ENCODE measurements at regions of chr10 and their contacts with region 1.

Region 1: GRCh38 chr10:122112625-122113160 is 123.7 kb downstream of the TACC2 start:
- DNase-seq: peak; percentile 77 to 89 (median 87)
- H3K4me3 ChIP-seq: peak overlapping the region; percentile 59
- H3K27ac ChIP-seq: peak overlapping the region; percentile 96 to 99
- H3K4me1 ChIP-seq: peaks cover 6% of the 10 kb centered on the region
- H3K27me3 ChIP-seq: no peaks in the 10 kb centered on the region
- CTCF ChIP-seq: peak; percentile 36 to 87 (median 44)
- EP300 ChIP-seq: no peak
- POLR2A ChIP-seq: peak; percentile 70

Region 2: DNA sequence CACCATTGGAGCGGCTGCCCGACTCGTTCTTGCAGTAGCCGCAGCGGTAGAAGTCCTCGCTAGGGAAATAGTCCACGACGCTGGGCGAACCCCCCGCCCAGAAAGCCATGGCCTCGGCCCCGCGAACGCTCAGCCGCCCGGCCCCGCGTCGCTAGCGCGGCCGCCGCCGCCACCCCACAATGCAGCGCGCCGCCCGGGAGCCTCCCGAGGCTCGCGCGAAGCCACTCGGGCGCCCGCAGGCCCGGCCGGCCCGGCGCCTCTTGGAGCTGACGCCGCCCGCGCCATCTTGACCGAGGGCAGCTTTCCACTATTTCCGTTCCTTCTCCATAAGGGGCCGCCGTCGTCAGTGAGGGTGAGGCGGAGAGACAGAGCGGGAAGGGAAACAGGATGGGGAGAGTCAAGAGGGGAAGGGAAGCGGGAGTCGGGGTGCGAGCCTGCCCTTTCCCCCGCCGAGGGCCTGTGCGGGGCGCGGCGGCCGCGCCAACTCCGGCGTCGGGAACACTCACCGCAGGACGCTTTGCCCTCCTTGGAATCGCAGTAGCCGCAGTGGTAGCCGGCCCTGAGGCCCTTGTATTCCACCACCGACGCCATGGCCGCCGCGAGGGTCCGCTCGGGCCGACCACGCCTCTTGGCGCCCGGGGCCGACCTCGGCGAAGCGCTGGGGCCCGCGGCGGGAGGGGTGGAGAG is 184.7 kb before region 1 on chr10 and contains the start of gene ATE1:
- intact Hi-C with region 1: loop called in 1 of 4 experiments (anchors 5 kb)
- DNase-seq: peak; percentile 89 to 95 (median 92)
- H3K4me3 ChIP-seq: peak within 1 kb of the TSS; percentile 90
- H3K27ac ChIP-seq: peak within 1 kb of the TSS; percentile 96 to 97
- H3K4me1 ChIP-seq: peaks cover 2% of the 10 kb centered on the region
- H3K27me3 ChIP-seq: no peaks in the 10 kb centered on the region
- CTCF ChIP-seq: peak in 1 of 3 donors; percentile 10
- EP300 ChIP-seq: no peak
- POLR2A ChIP-seq: peak; percentile 84
- total RNA-seq, gene ATE1: 19.0 to 36.6 (median 35.1) TPM

Region 3: DNA sequence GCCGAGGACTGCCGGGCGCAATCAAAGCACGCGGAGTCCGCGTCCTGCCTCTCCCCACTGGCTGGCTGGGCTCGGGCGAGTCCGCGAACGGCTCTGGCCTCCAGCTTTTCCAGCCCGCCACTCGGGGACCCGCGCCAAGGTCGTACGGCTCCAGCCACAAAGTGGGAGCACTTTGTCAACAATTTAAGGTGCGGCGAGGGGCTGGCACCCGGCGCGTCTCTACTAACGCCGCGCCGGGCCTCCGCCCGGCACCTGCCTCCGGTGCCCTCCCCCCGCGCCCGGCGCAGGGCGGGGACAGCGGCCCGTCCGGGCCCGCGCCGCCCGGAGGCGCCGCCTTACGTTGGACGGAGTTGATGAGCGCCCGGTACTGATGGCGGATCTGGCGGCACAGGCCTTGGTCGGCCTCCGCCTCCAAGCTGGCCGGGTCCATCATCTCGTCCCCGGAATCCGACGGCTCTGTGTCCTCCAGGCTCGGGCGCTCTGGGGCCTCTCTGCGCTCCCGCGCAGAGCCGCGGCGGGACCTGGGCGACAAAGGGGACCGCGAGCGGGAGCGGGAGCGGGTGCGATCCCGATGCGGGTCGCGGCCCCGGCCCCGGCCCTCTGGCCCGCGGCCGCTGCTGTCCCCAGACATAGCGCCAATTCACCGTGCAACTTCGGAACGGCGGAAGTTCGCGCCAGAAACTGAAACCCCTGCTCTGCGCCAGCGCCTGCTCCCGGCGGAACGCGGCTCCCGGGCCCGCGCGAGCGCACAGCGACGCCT is 138.0 kb before region 1 on chr10 and contains the start of gene NSMCE4A:
- intact Hi-C with region 1: loop called in 1 of 4 experiments (anchors 10 kb)
- DNase-seq: peak; percentile 72 to 85 (median 79)
- H3K4me3 ChIP-seq: peak within 1 kb of the TSS; percentile 80
- H3K27ac ChIP-seq: peak within 1 kb of the TSS; percentile 92 to 93
- H3K4me1 ChIP-seq: peaks cover 7% of the 10 kb centered on the region
- H3K27me3 ChIP-seq: no peaks in the 10 kb centered on the region
- CTCF ChIP-seq: peak in 2 of 3 donors; percentile 55 to 73
- EP300 ChIP-seq: no peak
- POLR2A ChIP-seq: peak; percentile 22
- total RNA-seq, gene NSMCE4A: 34.1 to 71.4 (median 41.2) TPM

Region 4: GRCh38 chr10:122051251-122051996 is 61.3 kb before region 1 on chr10:
- intact Hi-C with region 1: loop called (anchors 2 to 10 kb)
- DNase-seq: peak in 3 of 5 donors; percentile 40 to 53 (median 50)
- H3K4me3 ChIP-seq: no peak overlapping the region
- H3K27ac ChIP-seq: no peak overlapping the region
- H3K4me1 ChIP-seq: no peaks in the 10 kb centered on the region
- H3K27me3 ChIP-seq: no peaks in the 10 kb centered on the region
- CTCF ChIP-seq: peak in 1 of 3 donors; percentile 11
- EP300 ChIP-seq: no peak
- POLR2A ChIP-seq: no peak

Region 5: GRCh38 chr10:123100030-123100762 is 987.5 kb after region 1 on chr10:
- intact Hi-C with region 1: no loop called
- DNase-seq: no peak
- H3K4me3 ChIP-seq: no peak overlapping the region
- H3K27ac ChIP-seq: no peak overlapping the region
- H3K4me1 ChIP-seq: no peaks in the 10 kb centered on the region
- H3K27me3 ChIP-seq: no peaks in the 10 kb centered on the region
- CTCF ChIP-seq: no peak
- EP300 ChIP-seq: no peak
- POLR2A ChIP-seq: no peak

Measured in ovary (tissue), 10 donors.